CD4-positive, alpha-beta memory T cell (primary cell): ENCODE measurements at regions of chr9 and their contacts with region 1.

Region 1: DNA sequence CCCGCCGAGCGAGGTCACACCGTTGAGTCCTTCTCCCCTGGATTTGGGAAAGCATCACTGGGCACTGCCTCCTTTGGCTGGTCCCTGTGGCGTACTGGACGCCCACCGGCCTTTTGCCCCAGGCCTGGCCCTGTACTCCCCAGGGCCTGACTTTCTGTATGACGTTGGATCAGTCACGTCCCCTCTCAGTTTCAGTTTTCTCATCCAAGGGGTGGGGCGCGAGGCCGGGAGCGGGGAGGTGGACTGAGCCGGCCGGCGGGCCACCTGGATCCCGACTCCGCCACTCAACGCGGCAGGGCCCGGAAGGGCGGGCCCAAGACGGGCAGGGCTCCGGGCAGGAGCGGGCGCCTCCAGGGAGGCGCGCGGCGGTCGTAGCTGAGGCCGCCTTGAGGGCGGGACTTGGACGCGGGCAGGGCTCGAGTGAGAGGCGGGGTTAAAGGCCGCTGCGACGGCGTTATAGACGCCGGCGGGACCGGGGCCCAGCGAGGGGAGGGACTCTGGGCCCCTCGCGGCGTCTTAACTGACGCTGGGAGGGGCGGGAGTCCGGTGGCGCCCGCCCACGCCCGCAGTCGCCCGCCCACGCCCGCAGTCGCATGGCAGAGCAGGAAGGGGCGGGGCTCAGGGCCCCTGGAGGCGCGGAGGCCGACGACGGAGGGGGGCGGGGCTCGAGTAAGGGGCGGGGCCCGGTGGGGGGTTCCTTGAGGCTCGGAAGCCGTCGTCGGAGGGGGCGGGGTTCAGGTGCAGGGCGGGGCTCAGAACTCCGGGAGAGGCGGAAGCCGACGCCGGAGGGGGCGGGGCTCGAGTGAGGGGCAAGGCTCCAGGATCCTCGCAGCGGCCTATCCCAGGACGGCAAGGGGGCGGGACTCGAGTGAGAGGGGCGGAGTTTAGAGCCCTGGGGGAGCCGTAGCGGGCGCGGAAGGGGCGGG is 549 bp upstream of the CARD19 start:
- DNase-seq: peak; percentile 100
- H3K4me3 ChIP-seq: peak overlapping the region in 1 of 2 donors; percentile 93
- H3K4me3 Mint-ChIP-seq: peak overlapping the region; percentile 82 to 93 (median 87)
- H3K27ac ChIP-seq: peak overlapping the region; percentile 95
- H3K27ac Mint-ChIP-seq: peak overlapping the region; percentile 87 to 99 (median 98)
- H3K4me1 ChIP-seq: peaks cover 69% of the 10 kb centered on the region
- H3K4me1 Mint-ChIP-seq: peaks cover 47 to 86% (median 70%) of the 10 kb centered on the region in 4 donors
- H3K27me3 ChIP-seq: no peaks in the 10 kb centered on the region
- H3K27me3 Mint-ChIP-seq: no peaks in the 10 kb centered on the region

Region 2: DNA sequence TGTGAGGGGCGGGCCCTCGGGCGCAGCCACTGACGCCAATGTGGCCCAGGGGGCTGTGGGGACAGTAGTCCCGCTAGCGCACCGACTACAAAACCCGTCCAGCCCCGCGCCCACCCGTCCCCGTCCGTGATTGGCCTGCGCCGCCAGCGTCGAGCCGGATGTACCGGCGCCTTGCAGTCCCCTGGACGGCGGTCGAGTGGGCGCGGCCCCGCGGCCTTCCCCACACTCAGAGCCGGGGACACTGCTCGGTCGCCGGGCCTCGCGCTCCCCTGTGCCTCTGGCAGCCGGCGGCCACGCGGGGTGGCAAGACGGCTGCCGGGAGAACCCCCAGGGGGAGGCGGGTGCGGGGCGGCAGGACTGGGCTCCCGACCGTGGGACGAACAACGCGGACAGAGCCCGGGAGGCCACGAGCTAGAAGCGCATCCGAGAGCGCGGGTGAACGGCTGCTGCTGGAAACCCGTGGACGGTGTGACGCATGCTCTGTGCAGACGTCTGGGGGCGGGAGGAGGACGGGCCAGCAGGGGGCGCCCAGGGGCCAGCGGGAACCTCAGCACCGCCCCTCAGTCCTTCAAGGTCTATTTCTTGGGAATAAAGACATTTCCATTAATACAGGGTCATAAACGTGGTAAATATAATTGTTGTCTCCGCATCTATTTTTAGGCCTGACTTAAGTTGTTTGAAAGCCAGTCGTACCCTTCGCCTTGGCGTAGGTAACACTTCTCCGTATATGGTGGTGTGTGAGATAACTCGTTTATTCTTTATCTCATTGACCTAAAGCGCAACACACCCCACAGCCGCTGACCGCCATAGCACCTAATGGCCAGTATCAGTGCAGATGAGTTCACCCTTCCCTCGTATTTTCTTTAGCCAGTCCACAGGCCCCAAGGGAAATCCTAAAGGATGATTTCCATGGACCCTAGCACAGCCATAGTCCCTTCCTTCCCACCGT is 330.2 kb before region 1 on chr9:
- CTCF ChIA-PET with region 1: no interaction called
- POLR2A ChIA-PET with region 1: no interaction called
- intact Hi-C with region 1: loop called (anchors 1 kb)
- DNase-seq: peak; percentile 97 to 99 (median 99)
- H3K4me3 ChIP-seq: peak overlapping the region; percentile 2 to 80
- H3K4me3 Mint-ChIP-seq: peak overlapping the region; percentile 89 to 95 (median 90)
- H3K27ac ChIP-seq: peak overlapping the region; percentile 95
- H3K27ac Mint-ChIP-seq: peak overlapping the region; percentile 94 to 98 (median 96)
- H3K4me1 ChIP-seq: peaks cover 54% of the 10 kb centered on the region
- H3K4me1 Mint-ChIP-seq: peaks cover 43 to 66% (median 49%) of the 10 kb centered on the region in 4 donors
- H3K27me3 ChIP-seq: no peaks in the 10 kb centered on the region
- H3K27me3 Mint-ChIP-seq: no peaks in the 10 kb centered on the region

Region 3: DNA sequence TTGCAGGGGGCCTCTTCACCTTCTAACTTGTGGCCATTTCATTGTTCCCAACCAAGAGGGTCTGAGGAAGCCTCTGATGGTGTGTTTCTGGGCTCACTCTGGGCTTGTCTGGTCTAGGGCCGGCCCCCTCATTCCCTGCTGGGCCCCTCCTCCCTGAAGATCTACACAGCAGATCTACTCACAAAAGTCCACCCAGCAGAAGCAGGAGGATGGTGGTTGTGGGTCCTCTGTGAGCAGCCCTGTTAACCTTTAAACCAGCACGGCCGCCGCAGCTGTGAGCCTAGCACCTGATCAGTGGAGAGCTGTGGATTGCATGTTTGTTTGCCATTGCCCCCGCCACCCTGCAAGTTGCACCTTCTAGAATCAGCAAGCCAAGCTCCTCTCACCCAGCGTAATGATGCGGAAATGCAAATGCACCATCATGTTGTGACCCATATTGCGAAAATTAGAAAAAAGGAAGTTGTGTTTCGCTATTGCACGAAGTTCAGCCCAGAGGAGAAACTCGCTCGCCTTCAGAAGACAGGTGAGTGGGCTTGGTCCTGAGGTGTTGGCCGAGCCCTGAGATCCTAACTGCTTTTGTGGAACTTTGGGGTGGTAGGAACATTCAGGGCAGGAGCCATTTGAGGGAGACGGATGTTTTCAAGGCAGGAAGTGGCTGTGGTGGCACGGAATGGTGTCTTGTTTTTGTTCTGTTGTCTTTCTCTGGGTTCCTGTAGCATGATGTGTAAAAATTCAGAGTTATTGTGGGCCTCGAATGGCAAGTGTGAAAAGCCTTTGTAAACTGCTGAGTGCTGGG is 131.4 kb before region 1 on chr9:
- CTCF ChIA-PET with region 1: no interaction called
- POLR2A ChIA-PET with region 1: interaction called, 17 read pairs
- intact Hi-C with region 1: loop called (anchors 1 kb)
- DNase-seq: peak; percentile 87 to 92 (median 90)
- H3K4me3 ChIP-seq: peak overlapping the region; percentile 86 to 97
- H3K4me3 Mint-ChIP-seq: peak overlapping the region; percentile 93 to 99 (median 94)
- H3K27ac ChIP-seq: peak overlapping the region; percentile 84
- H3K27ac Mint-ChIP-seq: peak overlapping the region; percentile 96 to 100 (median 98)
- H3K4me1 ChIP-seq: peaks cover 81% of the 10 kb centered on the region
- H3K4me1 Mint-ChIP-seq: peaks cover 30 to 90% (median 57%) of the 10 kb centered on the region in 4 donors
- H3K27me3 ChIP-seq: no peaks in the 10 kb centered on the region
- H3K27me3 Mint-ChIP-seq: no peaks in the 10 kb centered on the region

Region 4: DNA sequence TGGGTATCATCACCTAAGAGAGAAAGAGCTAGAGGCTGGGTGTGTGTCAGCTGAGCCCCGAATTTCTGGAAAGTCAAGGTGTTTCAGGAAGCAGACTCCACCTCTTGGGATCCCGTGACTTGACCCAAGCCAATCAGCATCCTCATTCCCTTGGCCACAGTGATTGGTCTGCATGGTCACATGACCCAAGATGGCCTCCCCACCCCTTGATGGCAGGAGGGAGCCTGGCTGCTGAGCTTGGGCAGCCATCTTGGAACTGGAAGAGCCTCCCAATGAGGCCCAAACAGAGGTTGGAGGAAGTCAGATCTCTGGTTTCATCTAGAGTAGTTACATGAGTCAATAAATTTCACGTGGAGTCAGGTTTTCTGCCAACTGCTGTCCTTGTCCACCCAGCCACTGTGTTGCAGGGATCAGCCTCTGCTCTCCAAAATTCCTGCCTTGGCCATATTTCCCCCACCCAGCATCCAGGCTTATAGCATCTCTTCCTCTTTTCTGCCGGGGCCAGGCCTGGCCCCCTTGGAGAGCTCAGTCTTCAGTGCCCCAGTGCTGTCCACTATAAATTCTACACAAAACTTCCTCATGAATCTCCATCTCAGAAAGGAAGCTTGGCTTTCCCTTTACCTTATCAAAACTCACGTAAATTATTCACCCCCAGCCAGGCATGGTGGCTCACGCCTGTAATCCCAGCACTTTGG is 54.2 kb before region 1 on chr9:
- CTCF ChIA-PET with region 1: no interaction called
- POLR2A ChIA-PET with region 1: interaction called, 13 read pairs
- intact Hi-C with region 1: no loop called
- DNase-seq: peak in 1 of 5 donors; percentile 15
- H3K4me3 ChIP-seq: no peak overlapping the region
- H3K4me3 Mint-ChIP-seq: peak overlapping the region in 3 of 8 donors; percentile 8 to 31 (median 24)
- H3K27ac ChIP-seq: no peak overlapping the region
- H3K27ac Mint-ChIP-seq: peak overlapping the region; percentile 41 to 78 (median 74)
- H3K4me1 ChIP-seq: peaks cover 51% of the 10 kb centered on the region
- H3K4me1 Mint-ChIP-seq: peaks cover 27 to 64% (median 44%) of the 10 kb centered on the region in 4 donors
- H3K27me3 ChIP-seq: no peaks in the 10 kb centered on the region
- H3K27me3 Mint-ChIP-seq: no peaks in the 10 kb centered on the region

Region 5: GRCh38 chr9:93082841-93083411 is 12.5 kb before region 1 on chr9:
- CTCF ChIA-PET with region 1: interaction called, 4 read pairs
- POLR2A ChIA-PET with region 1: interaction called, 14 read pairs
- intact Hi-C with region 1: no loop called
- DNase-seq: no peak
- H3K4me3 ChIP-seq: no peak overlapping the region
- H3K4me3 Mint-ChIP-seq: peak overlapping the region in 1 of 8 donors; percentile 81
- H3K27ac ChIP-seq: peak overlapping the region; percentile 55
- H3K27ac Mint-ChIP-seq: peak overlapping the region in 5 of 7 donors; percentile 35 to 95 (median 82)
- H3K4me1 ChIP-seq: peaks cover 31% of the 10 kb centered on the region
- H3K4me1 Mint-ChIP-seq: peaks cover 15 to 42% (median 20%) of the 10 kb centered on the region in 4 donors
- H3K27me3 ChIP-seq: no peaks in the 10 kb centered on the region
- H3K27me3 Mint-ChIP-seq: no peaks in the 10 kb centered on the region

Region 6: GRCh38 chr9:93397661-93398373 is 302.3 kb after region 1 on chr9:
- CTCF ChIA-PET with region 1: no interaction called
- POLR2A ChIA-PET with region 1: no interaction called
- intact Hi-C with region 1: no loop called
- DNase-seq: no peak
- H3K4me3 ChIP-seq: no peak overlapping the region
- H3K4me3 Mint-ChIP-seq: no peak overlapping the region
- H3K27ac ChIP-seq: no peak overlapping the region
- H3K27ac Mint-ChIP-seq: no peak overlapping the region
- H3K4me1 ChIP-seq: no peaks in the 10 kb centered on the region
- H3K4me1 Mint-ChIP-seq: no peaks in the 10 kb centered on the region
- H3K27me3 ChIP-seq: no peaks in the 10 kb centered on the region
- H3K27me3 Mint-ChIP-seq: peaks cover 2 to 3% of the 10 kb centered on the region in 2 donors

Region 7: DNA sequence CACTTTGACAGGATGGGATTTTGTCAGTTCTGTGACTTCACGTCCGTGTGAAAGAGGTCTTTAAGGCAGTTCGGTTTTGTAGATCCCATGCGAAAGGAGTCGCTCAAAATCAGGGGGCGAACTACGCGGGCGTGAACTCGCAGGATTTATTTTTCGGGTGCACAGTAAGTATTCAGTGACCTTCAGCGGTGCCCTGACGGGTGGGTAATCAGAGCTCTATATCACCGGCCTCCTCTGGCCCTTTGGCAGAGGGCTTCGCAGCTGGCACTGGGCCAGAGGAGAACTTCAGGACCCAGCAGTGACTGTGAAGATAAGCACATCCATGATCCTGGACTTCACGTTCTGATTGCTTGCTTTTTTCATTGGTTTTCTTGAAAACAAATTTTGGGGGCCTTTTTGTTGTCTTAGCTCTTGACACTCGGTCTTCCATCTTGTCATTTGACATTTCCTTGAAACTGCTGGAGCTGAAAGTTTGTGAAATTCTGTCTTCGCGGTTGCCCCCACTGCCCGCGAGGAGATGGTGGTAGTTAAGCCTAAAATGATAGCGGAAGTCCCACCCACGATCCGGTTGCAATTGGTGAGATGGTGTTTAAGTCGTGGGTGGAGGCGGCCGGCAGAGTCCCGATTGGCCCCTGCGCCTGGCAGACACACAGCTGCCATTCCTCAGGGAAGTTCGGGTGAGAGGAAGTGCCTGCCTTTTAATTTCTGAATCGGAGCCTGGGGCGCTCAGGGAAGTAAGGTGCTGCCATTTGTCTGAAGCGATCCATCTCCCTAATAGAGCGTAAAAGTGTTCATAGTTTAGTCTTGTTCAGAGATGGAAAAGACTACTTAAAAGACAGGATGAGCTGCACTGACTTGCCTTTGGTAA is 357.8 kb after region 1 on chr9 and contains the start of gene FAM120AOS:
- CTCF ChIA-PET with region 1: no interaction called
- POLR2A ChIA-PET with region 1: interaction called, 4 read pairs
- intact Hi-C with region 1: loop called (anchors 2 kb)
- DNase-seq: peak; percentile 79 to 91 (median 80)
- H3K4me3 ChIP-seq: peak within 1 kb of the TSS; percentile 69 to 83
- H3K4me3 Mint-ChIP-seq: peak within 1 kb of the TSS; percentile 93 to 98 (median 96)
- H3K27ac ChIP-seq: peak within 1 kb of the TSS; percentile 69
- H3K27ac Mint-ChIP-seq: peak within 1 kb of the TSS; percentile 88 to 99 (median 97)
- H3K4me1 ChIP-seq: peaks cover 62% of the 10 kb centered on the region
- H3K4me1 Mint-ChIP-seq: peaks cover 36 to 63% (median 51%) of the 10 kb centered on the region in 4 donors
- H3K27me3 ChIP-seq: no peaks in the 10 kb centered on the region
- H3K27me3 Mint-ChIP-seq: no peaks in the 10 kb centered on the region
- total RNA-seq, gene FAM120AOS: 49.7 to 50.8 TPM

Region 8: DNA sequence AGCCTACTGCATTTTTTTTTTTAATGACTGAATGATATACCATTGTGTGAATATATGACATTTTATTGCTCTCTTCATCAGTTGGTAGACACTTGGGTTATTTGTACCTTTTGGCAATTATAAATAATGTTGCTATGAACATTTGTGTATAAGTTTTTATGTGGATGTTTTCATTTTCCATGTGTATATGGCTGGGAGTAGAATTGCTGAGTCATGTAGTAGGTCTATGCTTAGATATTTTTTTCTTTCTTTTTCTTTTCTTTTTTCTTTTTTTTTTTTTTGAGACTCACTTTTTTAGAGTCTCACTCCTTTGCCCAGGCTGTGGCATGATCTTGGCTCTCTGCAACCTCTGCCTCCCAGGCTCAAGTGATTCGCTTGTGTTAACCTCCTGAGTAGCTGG is 390.8 kb after region 1 on chr9:
- CTCF ChIA-PET with region 1: no interaction called
- POLR2A ChIA-PET with region 1: no interaction called
- intact Hi-C with region 1: no loop called
- DNase-seq: no peak
- H3K4me3 ChIP-seq: no peak overlapping the region
- H3K4me3 Mint-ChIP-seq: no peak overlapping the region
- H3K27ac ChIP-seq: no peak overlapping the region
- H3K27ac Mint-ChIP-seq: peak overlapping the region in 1 of 7 donors; percentile 54
- H3K4me1 ChIP-seq: peaks cover 8% of the 10 kb centered on the region
- H3K4me1 Mint-ChIP-seq: peaks cover 29 to 66% (median 42%) of the 10 kb centered on the region in 4 donors
- H3K27me3 ChIP-seq: no peaks in the 10 kb centered on the region
- H3K27me3 Mint-ChIP-seq: no peaks in the 10 kb centered on the region